Endothelial cell of umbilical vein (primary cell): ENCODE measurements at regions of chr3 and their contacts with region 1.

Region 1: DNA sequence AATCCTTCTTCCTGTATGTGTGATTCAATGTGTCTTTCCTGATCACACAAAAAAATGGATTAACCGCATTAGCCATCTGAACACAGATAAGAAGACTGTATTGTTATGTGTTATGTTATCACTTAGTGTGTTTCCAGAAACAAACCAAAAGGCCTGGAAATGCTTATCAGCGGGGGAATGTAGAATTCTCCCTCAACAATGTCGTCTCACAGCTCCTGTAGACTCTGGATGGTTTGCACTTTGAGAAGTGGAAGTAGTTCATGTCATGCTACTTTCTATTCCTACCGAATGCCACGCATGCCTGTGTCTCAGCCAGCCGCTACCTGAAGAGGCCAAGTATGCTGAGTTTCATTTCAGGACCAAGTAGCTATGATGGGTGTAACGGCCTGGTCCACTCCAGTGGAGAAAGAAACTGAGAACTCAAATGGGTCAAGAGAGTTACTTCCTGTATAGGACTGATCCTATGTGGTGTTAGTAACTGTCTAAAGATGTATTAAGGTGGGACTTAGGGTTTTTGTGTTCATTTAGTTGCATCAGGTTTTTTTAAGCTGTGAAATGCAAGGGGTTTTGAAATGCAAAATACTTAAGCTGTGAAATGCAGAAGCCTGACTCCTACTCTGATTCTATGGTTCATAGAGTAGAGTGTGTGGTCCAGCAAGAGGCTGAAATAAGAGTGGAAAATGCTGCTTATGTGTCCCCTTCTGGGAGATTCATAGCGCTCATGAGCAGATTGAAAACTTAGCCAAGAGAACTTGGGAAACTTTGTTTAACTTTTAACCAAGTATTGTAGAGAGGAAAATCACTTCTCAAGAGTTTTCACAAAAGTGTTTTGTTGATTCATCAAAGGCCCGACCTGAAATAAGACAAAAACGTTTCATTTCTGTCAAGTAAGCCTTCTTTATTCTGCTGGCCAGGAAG is 118.5 kb upstream of the LMOD3 start:
- DNase-seq: peak; percentile 80
- H3K4me3 ChIP-seq: no peak overlapping the region
- H3K27ac ChIP-seq: peak overlapping the region; percentile 90
- H3K4me1 ChIP-seq: peaks cover 66% of the 10 kb centered on the region
- H3K27me3 ChIP-seq: no peaks in the 10 kb centered on the region
- CTCF ChIP-seq: no peak
- POLR2A ChIP-seq: no peak

Region 2: DNA sequence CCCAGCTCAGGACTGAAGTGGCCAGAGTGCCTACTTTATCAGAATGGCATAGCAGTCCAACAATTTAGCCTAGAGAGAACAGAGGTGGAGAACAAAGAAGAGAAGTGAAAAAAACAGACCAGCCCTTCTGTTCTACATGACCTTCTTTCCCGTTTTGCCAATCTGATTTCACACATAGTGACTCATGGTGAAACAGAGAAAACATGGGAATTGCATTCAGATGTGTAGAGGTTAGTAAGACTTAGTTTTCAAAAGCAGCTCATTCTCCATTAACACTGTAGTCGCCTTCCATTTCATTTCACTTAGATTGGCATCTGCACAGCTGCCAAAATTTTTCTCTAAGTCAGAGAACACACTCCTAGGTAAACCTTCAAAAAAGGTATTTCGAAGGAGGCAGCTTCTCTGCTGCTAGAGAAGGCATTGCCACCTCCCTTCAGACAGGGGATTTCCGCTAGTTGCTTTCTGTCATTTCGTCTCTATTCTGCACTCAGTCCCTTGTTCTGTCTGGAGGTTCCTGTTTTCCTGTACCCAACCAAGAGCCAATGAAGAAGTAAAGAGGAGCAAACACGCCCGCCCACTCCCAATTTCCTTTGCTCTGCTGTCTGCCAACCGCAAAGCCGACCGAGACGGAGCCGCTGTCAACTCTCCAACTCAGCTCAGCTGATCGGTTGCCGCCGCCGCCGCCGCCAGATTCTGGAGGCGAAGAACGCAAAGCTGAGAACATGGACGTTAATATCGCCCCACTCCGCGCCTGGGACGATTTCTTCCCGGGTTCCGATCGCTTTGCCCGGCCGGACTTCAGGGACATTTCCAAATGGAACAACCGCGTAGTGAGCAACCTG is 156.4 kb before region 1 on chr3 and contains the start of gene ARL6IP5:
- CTCF ChIA-PET with region 1: no interaction called
- POLR2A ChIA-PET with region 1: no interaction called
- dilution Hi-C with region 1: no loop called
- intact Hi-C with region 1: loop called (anchors 5 kb)
- DNase-seq: peak; percentile 93
- H3K4me3 ChIP-seq: peak within 1 kb of the TSS; percentile 77 to 87 (median 80)
- H3K27ac ChIP-seq: peak within 1 kb of the TSS; percentile 68
- H3K4me1 ChIP-seq: peaks cover 72% of the 10 kb centered on the region
- H3K27me3 ChIP-seq: no peaks in the 10 kb centered on the region
- CTCF ChIP-seq: no peak
- POLR2A ChIP-seq: peak; percentile 70
- total RNA-seq, gene ARL6IP5: 111 and 116 TPM in 2 replicates

Region 3: DNA sequence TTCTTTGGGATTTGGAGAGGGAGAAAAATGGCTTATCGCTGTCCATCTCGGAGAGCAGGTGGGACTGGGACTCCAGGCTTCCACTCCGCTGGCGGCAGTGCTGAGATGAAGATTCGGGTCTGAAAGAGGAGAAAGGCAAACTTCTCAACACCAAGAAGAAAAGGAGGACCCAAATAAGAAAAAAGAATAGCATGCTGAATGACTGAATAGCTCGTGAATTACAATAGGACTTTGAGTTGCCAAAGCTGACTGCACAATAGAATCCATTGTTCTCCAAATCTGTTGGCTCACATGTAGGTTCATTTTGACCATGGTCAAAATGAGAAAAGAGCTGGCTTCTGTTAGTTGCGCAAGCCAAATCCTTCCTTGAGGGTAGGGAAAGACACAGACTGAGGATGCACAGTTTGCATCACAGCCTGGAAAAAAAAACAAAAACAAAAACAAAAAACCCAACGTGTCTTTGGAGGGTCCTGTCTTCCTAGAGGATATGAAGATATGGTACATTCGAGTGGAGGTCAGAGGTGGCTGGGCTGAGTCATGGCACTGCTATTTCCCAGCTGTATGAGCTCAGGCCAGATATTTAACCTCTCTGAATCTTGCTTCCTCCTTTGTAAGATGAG is 59.2 kb before region 1 on chr3:
- CTCF ChIA-PET with region 1: interaction called, 4 read pairs
- POLR2A ChIA-PET with region 1: interaction called, 3 read pairs
- dilution Hi-C with region 1: no loop called
- intact Hi-C with region 1: loop called (anchors 1 kb)
- DNase-seq: peak; percentile 98
- H3K4me3 ChIP-seq: no peak overlapping the region
- H3K27ac ChIP-seq: peak overlapping the region; percentile 93
- H3K4me1 ChIP-seq: peaks cover 59% of the 10 kb centered on the region
- H3K27me3 ChIP-seq: no peaks in the 10 kb centered on the region
- CTCF ChIP-seq: no peak
- POLR2A ChIP-seq: peak; percentile 31

Region 4: DNA sequence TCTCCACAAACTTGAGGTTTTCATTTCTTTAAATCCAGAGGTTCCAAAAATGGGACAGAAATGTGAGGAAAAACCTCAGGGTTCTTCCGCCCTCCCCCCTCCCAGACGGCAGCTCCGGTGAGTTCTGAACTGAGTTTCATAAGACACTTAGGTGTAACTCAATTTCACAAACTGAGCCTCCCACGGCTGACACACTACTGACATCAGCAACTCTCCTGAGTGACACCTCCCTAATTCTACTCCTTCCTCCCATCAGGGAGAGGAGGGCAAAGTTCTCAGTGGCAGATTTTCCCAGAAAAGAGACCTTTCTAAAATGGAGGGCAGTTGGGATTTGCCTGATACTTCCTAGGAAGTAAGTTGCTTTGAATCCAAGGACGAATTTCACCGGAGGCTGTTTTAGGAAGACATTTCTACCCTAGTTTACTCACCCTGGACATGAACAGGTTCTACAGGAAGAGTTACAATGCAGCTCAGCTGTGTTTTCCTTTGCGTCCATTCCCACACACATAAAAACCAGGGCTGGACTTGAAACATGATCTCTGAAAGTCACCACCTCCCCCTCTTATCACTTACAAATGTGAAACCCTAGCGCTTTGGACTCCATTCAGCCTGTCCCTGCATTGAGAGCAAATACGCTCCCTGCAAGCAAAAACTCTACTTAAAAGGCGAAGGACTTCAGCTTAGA is 40.4 kb before region 1 on chr3:
- CTCF ChIA-PET with region 1: interaction called, 11 read pairs
- POLR2A ChIA-PET with region 1: interaction called, 5 read pairs
- dilution Hi-C with region 1: no loop called
- intact Hi-C with region 1: loop called (anchors 5 kb)
- DNase-seq: peak; percentile 94
- H3K4me3 ChIP-seq: peak overlapping the region in 2 of 3 experiments; percentile 48 to 88
- H3K27ac ChIP-seq: peak overlapping the region; percentile 88
- H3K4me1 ChIP-seq: peaks cover 56% of the 10 kb centered on the region
- H3K27me3 ChIP-seq: no peaks in the 10 kb centered on the region
- CTCF ChIP-seq: no peak
- POLR2A ChIP-seq: no peak

Region 5: GRCh38 chr3:69212411-69213139 is 28.3 kb before region 1 on chr3:
- CTCF ChIA-PET with region 1: interaction called, 8 read pairs
- POLR2A ChIA-PET with region 1: interaction called, 3 read pairs
- dilution Hi-C with region 1: no loop called
- intact Hi-C with region 1: loop called (anchors 2 kb)
- DNase-seq: peak; percentile 94
- H3K4me3 ChIP-seq: no peak overlapping the region
- H3K27ac ChIP-seq: peak overlapping the region; percentile 68
- H3K4me1 ChIP-seq: peaks cover 39% of the 10 kb centered on the region
- H3K27me3 ChIP-seq: no peaks in the 10 kb centered on the region
- CTCF ChIP-seq: no peak
- POLR2A ChIP-seq: no peak

Region 6: DNA sequence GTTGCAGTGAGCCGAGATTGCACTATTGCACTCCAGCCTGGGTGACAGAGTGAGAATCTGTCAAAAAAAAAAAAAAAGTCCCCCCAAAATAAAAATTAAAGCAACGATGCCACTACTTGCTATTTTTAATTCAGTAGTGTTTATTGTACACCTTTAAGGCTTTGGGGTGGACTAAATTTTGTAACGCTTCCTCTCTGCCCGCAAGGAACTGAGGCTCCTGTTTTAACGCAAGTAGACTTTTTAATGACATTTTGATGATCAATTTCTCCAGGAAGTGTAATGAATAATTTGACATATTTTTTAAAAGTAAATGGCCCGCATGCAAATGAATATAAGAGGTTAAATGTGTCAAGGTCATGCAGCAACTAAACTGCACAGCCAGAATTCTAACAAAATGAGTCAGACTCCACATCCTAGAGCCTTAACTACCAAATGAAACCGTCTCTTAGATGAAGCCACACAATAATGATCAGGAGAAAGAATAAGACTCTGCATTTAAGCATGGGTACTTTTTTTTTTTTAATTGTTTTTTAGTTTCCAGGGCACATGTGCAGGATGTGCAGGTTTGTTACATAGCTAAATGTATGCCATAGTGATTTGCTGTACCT is 21.7 kb before region 1 on chr3:
- CTCF ChIA-PET with region 1: interaction called, 10 read pairs
- POLR2A ChIA-PET with region 1: interaction called, 3 read pairs
- dilution Hi-C with region 1: no loop called
- intact Hi-C with region 1: no loop called
- DNase-seq: peak; percentile 45
- H3K4me3 ChIP-seq: no peak overlapping the region
- H3K27ac ChIP-seq: no peak overlapping the region
- H3K4me1 ChIP-seq: peaks cover 17% of the 10 kb centered on the region
- H3K27me3 ChIP-seq: no peaks in the 10 kb centered on the region
- CTCF ChIP-seq: no peak
- POLR2A ChIP-seq: no peak

Region 7: GRCh38 chr3:69294014-69294775 is 53.3 kb after region 1 on chr3:
- CTCF ChIA-PET with region 1: interaction called, 3 read pairs
- POLR2A ChIA-PET with region 1: interaction called, 3 read pairs
- dilution Hi-C with region 1: no loop called
- intact Hi-C with region 1: loop called (anchors 1 kb)
- DNase-seq: no peak
- H3K4me3 ChIP-seq: no peak overlapping the region
- H3K27ac ChIP-seq: no peak overlapping the region
- H3K4me1 ChIP-seq: peaks cover 20% of the 10 kb centered on the region
- H3K27me3 ChIP-seq: no peaks in the 10 kb centered on the region
- CTCF ChIP-seq: no peak
- POLR2A ChIP-seq: no peak

Region 8: GRCh38 chr3:69368129-69368741 is 127.3 kb after region 1 on chr3:
- CTCF ChIA-PET with region 1: no interaction called
- POLR2A ChIA-PET with region 1: no interaction called
- dilution Hi-C with region 1: no loop called
- intact Hi-C with region 1: no loop called
- DNase-seq: peak; percentile 25
- H3K4me3 ChIP-seq: no peak overlapping the region
- H3K27ac ChIP-seq: no peak overlapping the region
- H3K4me1 ChIP-seq: peaks cover 31% of the 10 kb centered on the region
- H3K27me3 ChIP-seq: no peaks in the 10 kb centered on the region
- CTCF ChIP-seq: no peak
- POLR2A ChIP-seq: no peak